Calu3 (cell line): ENCODE measurements at regions of chr9 and their contacts with region 1.

Region 1: GRCh38 chr9:19174127-19174912 is 47.0 kb upstream of the PLIN2 start:
- DNase-seq: peak; percentile 48
- H3K4me3 Mint-ChIP-seq: no peak overlapping the region
- H3K27ac Mint-ChIP-seq: no peak overlapping the region
- H3K4me1 Mint-ChIP-seq: peaks cover 10% of the 10 kb centered on the region
- H3K27me3 Mint-ChIP-seq: no peaks in the 10 kb centered on the region
- CTCF ChIP-seq: peak; percentile 40

Region 2: GRCh38 chr9:18689921-18690320 is 484.4 kb before region 1 on chr9:
- CTCF ChIA-PET with region 1: no interaction called
- intact Hi-C with region 1: no loop called
- DNase-seq: no peak
- H3K4me3 Mint-ChIP-seq: no peak overlapping the region
- H3K27ac Mint-ChIP-seq: no peak overlapping the region
- H3K4me1 Mint-ChIP-seq: no peaks in the 10 kb centered on the region
- H3K27me3 Mint-ChIP-seq: no peaks in the 10 kb centered on the region
- CTCF ChIP-seq: no peak

Region 3: GRCh38 chr9:19048966-19049916 is 125.1 kb before region 1 on chr9 and contains the start of gene RRAGA:
- CTCF ChIA-PET with region 1: interaction called, 22 read pairs
- intact Hi-C with region 1: loop called (anchors 2 kb)
- DNase-seq: peak; percentile 92
- H3K4me3 Mint-ChIP-seq: peak within 1 kb of the TSS; percentile 80
- H3K27ac Mint-ChIP-seq: peak within 1 kb of the TSS; percentile 89
- H3K4me1 Mint-ChIP-seq: peaks cover 12% of the 10 kb centered on the region
- H3K27me3 Mint-ChIP-seq: no peaks in the 10 kb centered on the region
- CTCF ChIP-seq: peak; percentile 70
- total RNA-seq, gene RRAGA: 39.7 and 40.6 TPM in 2 replicates

Region 4: DNA sequence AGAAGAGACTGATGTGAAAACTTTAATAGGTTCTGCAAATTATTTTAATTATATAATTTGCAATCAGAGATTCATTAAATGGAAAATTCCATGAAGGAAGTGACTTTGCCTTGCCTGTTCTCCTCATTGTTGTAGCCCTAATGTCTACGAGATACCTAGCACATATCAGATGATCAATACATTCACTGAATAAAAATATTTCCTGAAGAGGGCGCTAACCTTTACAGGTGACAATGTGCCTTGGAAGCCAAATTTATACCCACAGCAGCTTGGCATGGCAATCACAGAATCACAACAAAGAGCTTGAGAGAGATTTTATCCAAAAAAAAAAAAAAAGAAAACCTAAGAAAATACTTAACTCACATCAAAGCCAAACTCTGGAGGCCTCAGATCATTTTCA is 89.0 kb before region 1 on chr9:
- CTCF ChIA-PET with region 1: interaction called, 5 read pairs
- intact Hi-C with region 1: loop called (anchors 5 kb)
- DNase-seq: no peak
- H3K4me3 Mint-ChIP-seq: no peak overlapping the region
- H3K27ac Mint-ChIP-seq: no peak overlapping the region
- H3K4me1 Mint-ChIP-seq: no peaks in the 10 kb centered on the region
- H3K27me3 Mint-ChIP-seq: no peaks in the 10 kb centered on the region
- CTCF ChIP-seq: no peak

Region 5: GRCh38 chr9:19102631-19103345 is 71.5 kb before region 1 on chr9 and contains the start of gene HAUS6:
- CTCF ChIA-PET with region 1: interaction called, 4 read pairs
- intact Hi-C with region 1: loop called (anchors 5 kb)
- DNase-seq: peak; percentile 88
- H3K4me3 Mint-ChIP-seq: peak within 1 kb of the TSS; percentile 88
- H3K27ac Mint-ChIP-seq: peak within 1 kb of the TSS; percentile 70
- H3K4me1 Mint-ChIP-seq: peaks cover 9% of the 10 kb centered on the region
- H3K27me3 Mint-ChIP-seq: no peaks in the 10 kb centered on the region
- CTCF ChIP-seq: peak; percentile 27
- total RNA-seq, gene HAUS6: 15.4 and 15.7 TPM in 2 replicates

Region 6: DNA sequence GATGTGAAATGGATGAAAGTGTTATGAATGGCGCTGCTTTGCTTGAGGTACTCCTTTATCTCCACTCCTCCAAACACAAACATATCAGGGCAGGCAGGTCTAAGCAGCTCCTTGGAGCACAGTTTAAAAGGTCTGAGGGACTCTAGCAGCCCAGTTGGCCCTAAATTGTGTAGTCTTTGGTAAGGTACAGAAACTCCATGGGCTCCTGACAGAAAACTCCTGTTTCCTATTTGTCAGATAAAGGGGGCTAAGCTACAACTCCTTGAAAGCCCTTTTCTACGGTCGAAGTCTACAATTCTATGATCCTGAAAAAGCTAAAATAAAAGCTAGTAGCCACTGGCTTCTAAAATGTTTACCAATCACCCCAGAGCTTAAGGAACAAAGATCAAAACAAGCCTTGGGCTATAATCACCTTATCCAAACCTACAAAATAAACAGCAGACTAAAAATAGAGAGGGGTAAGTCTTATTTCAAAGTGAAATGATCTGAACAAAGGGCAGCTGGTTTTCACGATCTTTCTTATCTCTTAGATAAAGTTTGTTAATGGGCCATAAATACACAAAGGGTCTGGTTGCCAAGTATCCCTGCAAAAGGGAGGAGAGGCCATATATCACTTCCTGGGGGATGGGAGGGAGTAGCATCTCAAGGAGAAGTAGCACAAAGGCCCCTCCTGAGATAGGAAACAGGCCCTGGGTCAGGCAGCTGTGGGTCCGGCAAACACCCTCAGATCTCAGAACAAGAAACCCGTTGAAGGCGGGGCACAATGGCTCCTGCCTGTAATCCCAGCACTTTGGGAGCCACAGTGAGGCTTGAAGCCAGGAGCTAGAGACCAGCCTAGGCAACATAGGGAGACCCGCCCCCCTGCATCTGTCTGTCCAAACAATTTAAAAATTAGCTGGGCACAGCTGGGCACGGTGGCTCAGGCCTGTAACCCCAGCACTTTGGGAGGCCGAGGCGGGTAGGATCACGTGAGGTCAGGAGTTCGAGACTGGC is 27.9 kb after region 1 on chr9:
- CTCF ChIA-PET with region 1: no interaction called
- intact Hi-C with region 1: no loop called
- DNase-seq: no peak
- H3K4me3 Mint-ChIP-seq: no peak overlapping the region
- H3K27ac Mint-ChIP-seq: no peak overlapping the region
- H3K4me1 Mint-ChIP-seq: peaks cover 8% of the 10 kb centered on the region
- H3K27me3 Mint-ChIP-seq: no peaks in the 10 kb centered on the region
- CTCF ChIP-seq: no peak